ENCODE measurements at regions of chr6 and their contacts with region 1.

Region 1: DNA sequence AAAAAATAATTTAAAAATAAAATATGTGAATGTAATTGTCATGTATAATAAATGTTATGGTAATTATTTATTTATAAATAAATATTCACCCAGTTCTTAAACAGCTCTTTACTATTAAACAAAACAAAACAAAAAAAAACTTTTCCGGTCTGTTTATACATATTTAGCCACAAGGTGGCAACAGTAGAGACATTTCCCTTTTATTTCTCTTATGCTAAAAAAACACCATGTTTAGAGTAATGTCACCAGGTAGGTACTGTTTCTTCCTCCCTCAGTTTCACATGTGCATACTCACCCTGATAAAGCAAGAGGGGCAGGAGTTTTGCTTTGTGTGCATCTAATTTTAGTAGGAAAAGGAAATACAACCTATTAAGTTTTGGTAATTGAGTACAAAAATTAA is 610.4 kb upstream of the IMPG1 start:
- DNase-seq: no peak
- ATAC-seq: no peak

Region 2: DNA sequence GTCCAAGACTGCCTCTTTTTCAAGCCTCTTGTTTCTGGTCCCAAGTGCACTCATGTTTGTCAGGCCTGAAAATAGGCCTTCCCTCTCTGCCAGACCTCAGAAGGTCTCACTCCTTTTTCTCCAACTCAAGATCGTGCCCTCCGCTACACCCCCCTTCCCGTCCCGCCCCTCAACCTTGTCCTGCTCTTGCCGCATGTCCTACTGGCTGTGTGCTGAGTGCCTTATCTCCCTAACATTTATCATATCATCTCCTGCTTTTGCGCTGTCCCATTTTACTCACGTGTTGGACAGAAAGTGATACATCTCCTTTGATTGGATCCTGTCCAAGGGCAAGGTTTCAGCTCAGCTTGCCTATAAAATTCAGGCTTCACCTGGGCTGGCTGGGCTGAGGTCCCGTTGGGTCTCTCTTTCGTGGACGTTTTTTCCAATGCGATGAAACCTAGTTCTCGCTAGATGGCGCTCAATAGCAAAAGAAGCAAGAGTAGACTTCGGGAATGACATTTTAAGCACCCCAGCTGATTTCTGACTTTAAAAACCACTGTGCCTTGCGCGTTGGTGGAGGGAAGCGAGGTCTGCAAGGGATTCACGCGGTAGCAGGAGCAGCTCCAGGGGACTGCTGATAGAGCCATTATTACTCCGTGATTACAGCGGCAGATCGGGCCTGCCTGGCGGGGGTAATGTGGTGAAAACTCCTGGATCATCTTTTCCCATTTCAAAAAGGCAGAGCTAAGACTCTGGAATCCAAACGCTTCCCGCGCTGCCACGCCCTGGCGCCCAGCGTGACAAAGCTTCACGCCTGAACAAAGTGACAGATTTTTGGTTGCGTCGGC is 748.0 kb before region 1 on chr6:
- intact Hi-C with region 1: loop called (anchors 10 kb)
- DNase-seq: peak; percentile 45
- ATAC-seq: peak; percentile 81

Region 3: GRCh38 chr6:77466055-77466450 is 783.2 kb after region 1 on chr6:
- intact Hi-C with region 1: loop called (anchors 10 kb)
- DNase-seq: peak; percentile 52
- ATAC-seq: peak; percentile 92

Measured in Right ventricle myocardium superior (tissue), 1 donor.